ENCODE measurements at regions of chr22 and their contacts with region 1.

Region 1: GRCh38 chr22:26483439-26484359 is at the starts of genes HPS4 and SRRD:
- DNase-seq: peak; percentile 98
- ATAC-seq: peak; percentile 80
- H3K4me3 Mint-ChIP-seq: peak within 1 kb of the TSS; percentile 91
- H3K27ac Mint-ChIP-seq: peak within 1 kb of the TSS; percentile 94
- H3K4me1 Mint-ChIP-seq: peaks cover 67% of the 10 kb centered on the region
- H3K27me3 Mint-ChIP-seq: no peaks in the 10 kb centered on the region
- CTCF ChIP-seq: no peak
- total RNA-seq, gene HPS4: 45.3 and 51.6 TPM in 2 replicates
- total RNA-seq, gene SRRD: 26.4 and 32.0 TPM in 2 replicates

Region 2: GRCh38 chr22:26502688-26503561 is 19.2 kb after region 1 on chr22:
- CTCF ChIA-PET with region 1: interaction called, 9 read pairs
- POLR2A ChIA-PET with region 1: interaction called, 13 read pairs
- intact Hi-C with region 1: no loop called
- DNase-seq: no peak
- ATAC-seq: peak; percentile 86
- H3K4me3 Mint-ChIP-seq: peak overlapping the region; percentile 33
- H3K27ac Mint-ChIP-seq: peak overlapping the region; percentile 78
- H3K4me1 Mint-ChIP-seq: peaks cover 17% of the 10 kb centered on the region
- H3K27me3 Mint-ChIP-seq: no peaks in the 10 kb centered on the region
- CTCF ChIP-seq: no peak

Region 3: GRCh38 chr22:26511857-26512793 is 28.4 kb after region 1 on chr22 and contains the start of gene TFIP11:
- CTCF ChIA-PET with region 1: no interaction called
- POLR2A ChIA-PET with region 1: interaction called, 37 read pairs
- intact Hi-C with region 1: loop called (anchors 1 kb)
- DNase-seq: peak; percentile 89
- ATAC-seq: peak; percentile 94
- H3K4me3 Mint-ChIP-seq: peak within 1 kb of the TSS; percentile 100
- H3K27ac Mint-ChIP-seq: peak within 1 kb of the TSS; percentile 96
- H3K4me1 Mint-ChIP-seq: peaks cover 39% of the 10 kb centered on the region
- H3K27me3 Mint-ChIP-seq: no peaks in the 10 kb centered on the region
- CTCF ChIP-seq: no peak
- total RNA-seq, gene TFIP11: 59.0 and 62.8 TPM in 2 replicates

Region 4: DNA sequence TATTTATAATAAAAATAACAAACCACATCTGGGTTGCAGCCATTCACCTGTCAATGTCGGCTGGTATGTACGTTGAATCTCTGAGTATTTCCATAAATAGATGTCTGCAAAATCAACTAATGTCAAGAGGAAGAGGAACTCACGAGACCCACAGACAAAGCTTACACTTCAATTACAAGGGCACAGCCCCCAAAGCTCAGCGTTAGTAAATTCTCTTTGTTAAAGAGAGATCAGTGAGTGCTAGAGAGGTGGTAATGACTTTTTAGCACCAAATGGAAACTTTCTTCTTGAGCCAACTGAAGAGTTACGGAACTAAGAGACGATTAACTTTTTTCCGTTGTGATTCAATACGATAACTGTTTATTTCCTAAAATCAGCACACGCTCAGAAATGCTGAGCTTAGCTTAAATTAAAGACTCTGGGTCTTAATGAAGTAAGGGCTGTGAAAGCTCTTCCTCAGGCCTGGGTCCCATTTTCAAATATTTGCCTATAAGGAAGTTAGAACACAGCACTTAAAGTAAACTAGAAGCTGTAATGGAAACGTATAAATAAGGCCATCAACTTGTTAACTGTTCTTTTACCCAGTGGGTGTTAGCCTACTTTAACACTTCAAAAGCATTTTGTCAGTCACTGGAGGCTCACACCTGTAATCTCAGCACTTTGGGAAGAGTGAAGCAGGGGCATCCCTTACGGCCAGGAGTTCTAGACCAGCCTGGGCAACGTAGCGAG is 51.3 kb after region 1 on chr22:
- CTCF ChIA-PET with region 1: no interaction called
- POLR2A ChIA-PET with region 1: interaction called, 19 read pairs
- intact Hi-C with region 1: no loop called
- DNase-seq: no peak
- ATAC-seq: peak; percentile 50
- H3K4me3 Mint-ChIP-seq: peak overlapping the region; percentile 67
- H3K27ac Mint-ChIP-seq: peak overlapping the region; percentile 94
- H3K4me1 Mint-ChIP-seq: peaks cover 49% of the 10 kb centered on the region
- H3K27me3 Mint-ChIP-seq: no peaks in the 10 kb centered on the region
- CTCF ChIP-seq: no peak

Region 5: GRCh38 chr22:26589845-26590736 is 106.4 kb after region 1 on chr22 and contains the start of gene TPST2:
- CTCF ChIA-PET with region 1: no interaction called
- POLR2A ChIA-PET with region 1: interaction called, 3 read pairs
- intact Hi-C with region 1: loop called (anchors 5 kb)
- DNase-seq: peak; percentile 78
- ATAC-seq: peak; percentile 94
- H3K4me3 Mint-ChIP-seq: peak within 1 kb of the TSS; percentile 87
- H3K27ac Mint-ChIP-seq: peak within 1 kb of the TSS; percentile 72
- H3K4me1 Mint-ChIP-seq: peaks cover 39% of the 10 kb centered on the region
- H3K27me3 Mint-ChIP-seq: no peaks in the 10 kb centered on the region
- CTCF ChIP-seq: no peak
- total RNA-seq, gene TPST2: 10.4 and 11.0 TPM in 2 replicates

Region 6: GRCh38 chr22:26672590-26673468 is 189.1 kb after region 1 on chr22:
- CTCF ChIA-PET with region 1: interaction called, 4 read pairs
- POLR2A ChIA-PET with region 1: interaction called, 32 read pairs
- intact Hi-C with region 1: no loop called
- DNase-seq: peak; percentile 82
- ATAC-seq: peak; percentile 67
- H3K4me3 Mint-ChIP-seq: peak overlapping the region; percentile 98
- H3K27ac Mint-ChIP-seq: peak overlapping the region; percentile 99
- H3K4me1 Mint-ChIP-seq: peaks cover 92% of the 10 kb centered on the region
- H3K27me3 Mint-ChIP-seq: no peaks in the 10 kb centered on the region
- CTCF ChIP-seq: no peak

Region 7: DNA sequence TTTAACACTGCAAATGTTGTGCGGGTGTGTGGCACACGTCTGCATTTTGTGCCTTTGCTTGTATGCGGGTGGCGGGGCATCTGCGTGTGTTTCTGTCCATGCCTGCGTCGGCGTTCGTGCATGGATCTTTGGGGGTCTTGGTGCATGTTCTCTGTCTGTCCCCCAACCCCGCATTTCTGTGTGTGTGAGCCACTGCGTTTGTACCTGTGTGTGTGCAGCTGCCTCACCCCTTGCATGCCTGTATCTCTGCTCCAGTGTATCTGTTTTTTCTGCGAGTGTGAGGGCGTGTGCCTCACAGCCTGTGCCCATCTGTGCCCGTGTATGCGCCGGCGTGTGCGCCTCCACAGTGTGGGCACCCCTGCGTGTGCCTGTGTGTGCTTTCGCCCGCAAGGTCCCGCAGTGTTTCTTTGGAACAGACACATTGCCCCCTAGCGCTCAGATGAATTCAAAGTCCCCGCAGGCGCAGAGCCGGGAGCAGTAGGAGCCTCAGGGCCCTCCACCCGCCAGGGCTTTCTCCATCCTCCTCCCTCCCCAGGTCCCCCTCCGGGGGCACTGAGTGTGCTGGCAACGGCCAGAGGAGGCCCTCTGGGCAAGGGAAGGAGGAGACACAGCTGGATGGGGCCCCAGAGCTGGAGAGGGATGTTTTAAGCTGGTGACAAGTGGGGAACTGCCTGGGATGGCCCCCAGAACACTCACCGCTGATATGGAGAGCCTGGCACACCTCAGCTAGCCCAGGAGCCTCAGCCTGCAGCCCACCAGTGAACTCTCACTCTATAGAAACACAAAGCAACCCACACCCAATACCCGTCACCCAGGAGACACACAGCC is 1321.0 kb after region 1 on chr22:
- CTCF ChIA-PET with region 1: no interaction called
- POLR2A ChIA-PET with region 1: no interaction called
- intact Hi-C with region 1: loop called (anchors 5 kb)
- DNase-seq: no peak
- ATAC-seq: no peak
- H3K4me3 Mint-ChIP-seq: peak overlapping the region; percentile 53
- H3K27ac Mint-ChIP-seq: no peak overlapping the region
- H3K4me1 Mint-ChIP-seq: peaks cover 12% of the 10 kb centered on the region
- H3K27me3 Mint-ChIP-seq: peaks cover 39% of the 10 kb centered on the region
- CTCF ChIP-seq: no peak